ENCODE measurements at regions of chr9 and their contacts with region 1.

Region 1: GRCh38 chr9:136631038-136632000 is 31.4 kb upstream of the EGFL7 start:
- DNase-seq: no peak
- ATAC-seq: peak; percentile 85
- H3K4me3 ChIP-seq: no peak overlapping the region
- H3K27ac ChIP-seq: no peak overlapping the region
- H3K4me1 ChIP-seq: peaks cover 2% of the 10 kb centered on the region; the same call in 1 of the 2 replicates
- H3K27me3 ChIP-seq: no peaks in the 10 kb centered on the region
- CTCF ChIP-seq: peak; percentile 85

Region 2: DNA sequence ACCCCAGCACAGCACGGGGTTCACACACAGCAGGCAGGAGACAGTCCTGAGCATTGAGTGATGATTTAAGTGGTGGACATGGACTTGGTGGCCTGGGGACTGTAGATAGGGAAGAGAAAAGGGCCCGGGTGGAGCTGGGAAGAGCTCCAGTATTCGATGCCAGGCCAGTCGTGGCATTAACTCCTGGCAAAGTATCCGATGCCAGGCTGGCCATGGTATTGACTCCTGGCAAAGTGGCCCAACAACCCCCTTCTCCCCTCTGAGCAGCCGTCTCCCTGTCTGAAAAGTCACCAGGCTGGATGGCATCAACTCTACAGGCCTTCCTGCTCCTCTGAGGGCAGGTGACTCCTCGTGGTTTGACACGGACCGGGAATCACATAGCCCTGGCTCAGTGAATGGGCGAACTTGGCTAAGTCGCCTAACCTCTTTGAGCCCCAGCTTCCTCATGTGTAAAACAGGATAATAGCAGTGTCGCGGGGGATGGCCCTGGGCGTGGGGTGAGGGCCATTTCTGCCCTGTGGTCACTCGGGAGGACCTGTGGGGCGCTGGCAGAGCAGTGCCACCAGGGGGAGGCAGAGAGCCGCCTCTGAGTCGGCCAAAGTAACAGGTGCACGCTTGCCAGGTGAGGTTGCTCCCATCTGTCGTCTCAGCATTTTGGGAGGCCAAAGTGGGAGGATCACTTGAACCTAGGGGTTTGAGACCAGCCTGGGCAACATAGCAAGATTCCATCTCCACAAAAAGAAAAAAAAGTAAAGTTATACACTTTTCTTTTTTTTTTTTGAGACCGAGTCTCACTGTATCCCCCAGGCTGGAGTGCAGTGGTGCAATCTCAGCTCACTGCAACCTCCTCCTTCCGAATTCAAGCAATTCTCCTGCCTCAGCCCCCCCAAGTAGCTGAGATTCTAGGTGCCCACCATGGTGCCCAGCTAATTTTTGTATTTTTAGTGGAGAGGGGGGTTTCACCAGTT is 142.8 kb before region 1 on chr9:
- CTCF ChIA-PET with region 1: interaction called, 18 read pairs
- POLR2A ChIA-PET with region 1: no interaction called
- in situ Hi-C with region 1: no loop called
- intact Hi-C with region 1: loop called (anchors 2 kb)
- DNase-seq: peak; percentile 48
- ATAC-seq: peak; percentile 49
- H3K4me3 ChIP-seq: no peak overlapping the region
- H3K27ac ChIP-seq: no peak overlapping the region
- H3K4me1 ChIP-seq: peaks cover 8% of the 10 kb centered on the region
- H3K27me3 ChIP-seq: no peaks in the 10 kb centered on the region
- CTCF ChIP-seq: peak; percentile 94

Measured in Panc1 (cell line).